Activated CD8-positive, alpha-beta memory T cell treated with anti-CD3 and anti-CD28 coated beads, Interleukin-2, amount 10 ng/mL, durations not matched to agents 7 days and 5 days (primary cell): ENCODE measurements at regions of chr3 and their contacts with region 1.

Region 1: GRCh38 chr3:30658328-30659052 is 52.1 kb downstream of the TGFBR2 start:
- DNase-seq: peak; percentile 83
- ATAC-seq: peak; percentile 70
- H3K4me3 Mint-ChIP-seq: peak overlapping the region; percentile 47
- H3K27ac Mint-ChIP-seq: peak overlapping the region; percentile 90
- H3K4me1 Mint-ChIP-seq: peaks cover 93% of the 10 kb centered on the region
- H3K27me3 Mint-ChIP-seq: no peaks in the 10 kb centered on the region

Region 2: GRCh38 chr3:30606301-30607031 is 52.0 kb before region 1 on chr3 and contains the start of gene TGFBR2:
- CTCF ChIA-PET with region 1: interaction called, 15 read pairs
- DNase-seq: peak; percentile 95
- ATAC-seq: peak; percentile 83
- H3K4me3 Mint-ChIP-seq: peak within 1 kb of the TSS; percentile 91
- H3K27ac Mint-ChIP-seq: peak within 1 kb of the TSS; percentile 99
- H3K4me1 Mint-ChIP-seq: peaks cover 53% of the 10 kb centered on the region
- H3K27me3 Mint-ChIP-seq: no peaks in the 10 kb centered on the region
- total RNA-seq, gene TGFBR2: 47.3 to 50.5 TPM

Region 3: DNA sequence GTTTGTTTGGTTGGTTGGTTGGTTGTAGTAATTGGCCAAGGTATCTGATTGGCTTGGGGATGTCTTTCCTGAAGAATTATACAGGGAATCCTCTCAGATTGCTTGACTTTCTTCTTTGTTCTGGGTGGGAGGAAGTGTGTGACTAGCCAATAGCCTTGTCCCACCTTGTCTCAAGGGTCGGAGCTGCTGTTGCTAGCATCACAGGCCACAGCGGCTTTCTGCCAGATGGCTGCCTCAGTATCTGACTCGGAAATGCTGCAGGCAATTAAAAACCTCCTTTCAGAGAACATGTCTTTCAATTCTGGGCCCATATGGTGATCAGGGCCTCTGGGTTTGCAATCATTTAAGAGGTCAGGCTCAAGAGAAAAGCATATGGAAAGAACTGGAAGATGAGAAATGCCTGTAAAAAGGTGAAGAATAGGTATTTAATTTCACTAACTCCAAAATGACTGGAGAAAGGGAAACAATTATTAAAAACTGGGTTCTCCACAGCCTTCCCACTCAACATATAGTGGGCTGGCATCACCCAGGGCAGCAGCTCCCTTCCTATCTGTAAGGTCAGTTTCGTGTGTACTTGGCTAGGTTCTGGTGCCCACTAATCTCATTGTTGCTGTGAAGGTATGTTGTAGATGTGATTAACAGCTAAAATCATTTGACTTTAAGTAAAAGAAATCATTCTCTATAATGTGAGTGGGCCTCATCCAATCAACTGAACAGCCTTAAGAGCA is 19.6 kb before region 1 on chr3:
- CTCF ChIA-PET with region 1: interaction called, 49 read pairs
- DNase-seq: peak; percentile 62
- ATAC-seq: no peak
- H3K4me3 Mint-ChIP-seq: peak overlapping the region; percentile 49
- H3K27ac Mint-ChIP-seq: peak overlapping the region; percentile 96
- H3K4me1 Mint-ChIP-seq: peaks cover 94% of the 10 kb centered on the region
- H3K27me3 Mint-ChIP-seq: no peaks in the 10 kb centered on the region

Region 4: DNA sequence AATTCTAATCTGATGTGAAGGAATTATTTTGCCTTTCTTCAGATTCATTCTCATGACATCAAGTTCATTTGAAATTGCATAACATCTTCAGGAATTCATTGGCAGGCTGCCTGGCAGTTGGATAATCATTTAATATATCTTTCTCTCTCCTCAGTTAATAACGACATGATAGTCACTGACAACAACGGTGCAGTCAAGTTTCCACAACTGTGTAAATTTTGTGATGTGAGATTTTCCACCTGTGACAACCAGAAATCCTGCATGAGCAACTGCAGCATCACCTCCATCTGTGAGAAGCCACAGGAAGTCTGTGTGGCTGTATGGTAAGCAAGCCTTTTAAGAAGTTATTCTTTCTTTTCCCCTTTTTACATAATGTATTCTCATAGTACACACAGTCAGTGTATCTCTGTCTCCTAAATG is 13.9 kb before region 1 on chr3:
- CTCF ChIA-PET with region 1: interaction called, 49 read pairs
- DNase-seq: peak; percentile 82
- ATAC-seq: peak; percentile 49
- H3K4me3 Mint-ChIP-seq: peak overlapping the region; percentile 62
- H3K27ac Mint-ChIP-seq: peak overlapping the region; percentile 96
- H3K4me1 Mint-ChIP-seq: peaks cover 90% of the 10 kb centered on the region
- H3K27me3 Mint-ChIP-seq: no peaks in the 10 kb centered on the region

Region 5: GRCh38 chr3:30693470-30694120 is 35.1 kb after region 1 on chr3:
- CTCF ChIA-PET with region 1: interaction called, 12 read pairs
- DNase-seq: peak; percentile 60
- ATAC-seq: peak; percentile 93
- H3K4me3 Mint-ChIP-seq: no peak overlapping the region
- H3K27ac Mint-ChIP-seq: no peak overlapping the region
- H3K4me1 Mint-ChIP-seq: peaks cover 34% of the 10 kb centered on the region
- H3K27me3 Mint-ChIP-seq: no peaks in the 10 kb centered on the region

Region 6: DNA sequence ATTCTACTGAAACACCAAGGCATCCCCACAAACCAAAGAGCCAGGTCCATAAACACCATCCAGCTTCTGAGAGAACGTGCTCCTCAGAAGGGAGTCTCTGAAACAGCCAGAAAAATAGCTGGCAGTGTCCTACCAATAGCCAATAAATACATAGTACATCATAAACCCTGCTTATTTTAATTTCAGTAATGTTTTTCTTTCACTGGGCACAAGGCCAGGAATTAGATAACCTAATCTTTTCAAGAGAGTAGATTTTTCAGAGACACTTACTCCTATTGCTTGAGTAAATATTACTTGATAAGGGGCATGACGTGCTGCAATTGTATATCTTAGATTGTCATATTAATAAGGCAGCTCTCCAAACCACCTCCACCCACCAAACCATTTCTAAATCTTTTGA is 213.2 kb after region 1 on chr3:
- CTCF ChIA-PET with region 1: no interaction called
- DNase-seq: no peak
- ATAC-seq: no peak
- H3K4me3 Mint-ChIP-seq: no peak overlapping the region
- H3K27ac Mint-ChIP-seq: no peak overlapping the region
- H3K4me1 Mint-ChIP-seq: no peaks in the 10 kb centered on the region
- H3K27me3 Mint-ChIP-seq: peaks cover 7% of the 10 kb centered on the region